ENCODE measurements at regions of chr5 and their contacts with region 1.

Region 1: GRCh38 chr5:91928754-91929521 is 545.8 kb upstream of the ARRDC3 start:
- DNase-seq: peak; percentile 73
- H3K4me3 ChIP-seq: no peak overlapping the region
- H3K27ac ChIP-seq: no peak overlapping the region
- H3K4me1 ChIP-seq: peaks cover 8% of the 10 kb centered on the region
- H3K27me3 ChIP-seq: no peaks in the 10 kb centered on the region
- CTCF ChIP-seq: peak; percentile 70

Region 2: GRCh38 chr5:91641730-91642350 is 287.1 kb before region 1 on chr5:
- CTCF ChIA-PET with region 1: no interaction called
- POLR2A ChIA-PET with region 1: no interaction called
- intact Hi-C with region 1: loop called (anchors 10 kb)
- DNase-seq: peak; percentile 77
- H3K4me3 ChIP-seq: no peak overlapping the region
- H3K27ac ChIP-seq: no peak overlapping the region
- H3K4me1 ChIP-seq: peaks cover 11% of the 10 kb centered on the region
- H3K27me3 ChIP-seq: no peaks in the 10 kb centered on the region
- CTCF ChIP-seq: peak; percentile 71

Region 3: DNA sequence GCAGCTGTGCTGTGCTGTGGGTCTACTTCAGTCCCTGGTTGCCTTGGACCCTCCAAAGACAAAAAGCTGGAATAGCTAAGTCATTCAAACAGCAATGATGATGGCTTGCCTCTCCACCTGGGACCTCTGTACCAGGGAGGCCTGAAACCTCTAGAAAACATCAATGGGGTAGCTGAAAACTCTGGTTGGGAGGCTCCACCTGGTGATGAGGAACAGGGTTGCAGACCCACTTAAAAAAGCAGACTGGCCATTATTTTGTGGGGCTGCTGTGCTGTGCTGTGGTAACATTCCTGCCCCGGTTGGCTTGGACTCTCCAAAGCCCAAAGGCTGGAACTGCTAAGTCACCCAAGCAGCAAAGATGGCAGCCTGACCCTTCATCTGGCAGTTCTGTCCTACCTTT is 293.5 kb after region 1 on chr5:
- CTCF ChIA-PET with region 1: no interaction called
- POLR2A ChIA-PET with region 1: no interaction called
- intact Hi-C with region 1: loop called (anchors 1 kb)
- DNase-seq: peak; percentile 3
- H3K4me3 ChIP-seq: no peak overlapping the region
- H3K27ac ChIP-seq: no peak overlapping the region
- H3K4me1 ChIP-seq: no peaks in the 10 kb centered on the region
- H3K27me3 ChIP-seq: no peaks in the 10 kb centered on the region
- CTCF ChIP-seq: peak; percentile 31; the same call in 1 of the 2 replicates

Measured in A673 (cell line).